ENCODE measurements at regions of chr9 and their contacts with region 1.

Region 1: DNA sequence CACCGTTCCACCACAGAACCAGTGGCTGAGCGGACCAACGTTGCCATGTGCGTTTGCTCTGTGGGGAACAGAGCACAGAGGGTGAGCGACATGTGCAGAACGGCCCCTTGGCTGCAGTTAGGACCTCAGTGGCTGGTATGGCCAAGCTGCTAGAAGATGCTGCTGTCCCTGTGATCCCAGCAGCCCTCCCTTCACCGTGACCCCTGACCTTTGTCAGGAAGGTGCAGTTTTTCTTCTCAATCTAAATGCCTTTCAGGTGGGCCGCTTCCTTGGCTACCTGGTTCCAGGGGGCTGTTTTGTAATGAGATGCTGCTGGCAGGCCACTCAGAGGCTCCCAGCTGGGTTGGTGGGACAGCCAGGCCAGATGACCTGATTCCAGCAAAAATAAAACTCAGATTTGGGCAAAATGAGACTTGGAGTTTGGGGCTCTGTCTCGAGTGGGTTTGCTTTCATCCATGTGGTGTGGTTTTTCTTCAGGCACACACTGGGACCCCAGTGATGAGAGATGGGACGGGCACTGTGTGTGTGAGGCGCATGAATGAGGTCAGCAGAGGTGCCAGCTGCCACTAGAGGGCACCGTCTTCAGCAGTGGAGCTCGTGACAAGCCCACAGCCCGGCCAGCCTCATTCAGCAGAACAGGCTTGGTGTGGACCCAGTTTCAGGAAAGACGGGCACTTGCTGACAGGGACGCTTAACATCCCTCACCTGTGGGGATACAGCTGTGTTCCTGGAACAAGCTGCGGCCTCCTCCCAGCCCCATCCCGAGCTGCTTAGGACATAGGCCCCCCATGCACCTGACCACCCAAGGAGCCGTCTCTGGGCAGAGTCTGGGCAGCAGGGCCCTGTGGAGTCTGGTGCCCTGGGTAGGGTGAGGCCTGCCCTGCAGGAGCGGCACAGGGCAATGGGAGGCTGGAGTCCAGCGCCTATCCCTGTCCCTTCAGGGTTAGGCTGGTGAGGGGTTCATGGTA is 4.1 kb downstream of the MRPS2 start:
- H3K4me3 ChIP-seq: no peak overlapping the region
- H3K27ac ChIP-seq: no peak overlapping the region
- H3K4me1 ChIP-seq: peaks cover 3% of the 10 kb centered on the region; the same call in 1 of the 2 replicates
- CTCF ChIP-seq: peak; percentile 74

Region 2: GRCh38 chr9:135517407-135517822 is 12.9 kb after region 1 on chr9:
- CTCF ChIA-PET with region 1: interaction called, 11 read pairs
- POLR2A ChIA-PET with region 1: no interaction called
- H3K4me3 ChIP-seq: no peak overlapping the region
- H3K27ac ChIP-seq: no peak overlapping the region
- H3K4me1 ChIP-seq: no peaks in the 10 kb centered on the region
- CTCF ChIP-seq: no peak

Region 3: DNA sequence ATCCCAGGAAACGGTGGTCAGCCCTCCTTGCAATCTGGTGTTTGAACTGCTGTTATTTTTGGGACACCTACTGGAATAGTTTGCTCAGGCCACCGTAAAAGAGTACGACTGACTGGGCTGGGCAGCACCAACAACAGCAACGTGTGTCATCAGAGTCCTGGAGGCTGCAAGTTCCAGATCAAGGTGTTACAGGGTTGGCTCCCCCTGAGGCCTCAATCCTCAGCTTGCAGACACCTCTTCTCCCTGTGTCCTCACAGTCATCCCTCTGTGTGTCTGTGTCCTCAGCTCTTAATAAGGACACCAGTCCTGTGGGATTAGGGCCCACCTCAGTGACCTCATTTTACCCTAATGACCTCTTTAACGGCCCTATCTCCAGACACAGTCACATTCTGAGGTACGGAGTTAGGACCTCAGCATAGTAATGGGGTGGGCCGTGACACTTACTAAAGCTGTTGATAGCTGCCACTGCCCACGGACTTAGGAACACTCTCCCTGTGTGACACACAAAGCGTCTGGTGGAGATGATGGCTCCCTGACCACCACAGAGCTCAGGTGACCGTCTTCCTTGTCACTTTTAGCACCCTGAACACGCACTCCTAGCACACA is 118.0 kb after region 1 on chr9:
- CTCF ChIA-PET with region 1: interaction called, 11 read pairs
- POLR2A ChIA-PET with region 1: no interaction called
- H3K4me3 ChIP-seq: no peak overlapping the region
- H3K27ac ChIP-seq: no peak overlapping the region
- H3K4me1 ChIP-seq: no peaks in the 10 kb centered on the region
- CTCF ChIP-seq: no peak